Heart left ventricle (tissue), 16 donors: ENCODE measurements at regions of chr2 and their contacts with region 1.

Region 1: GRCh38 chr2:174997110-174997509 is 8.1 kb downstream of the CHN1 start:
- DNase-seq: no peak
- ATAC-seq: no peak
- H3K4me3 ChIP-seq: no peak overlapping the region
- H3K27ac ChIP-seq: no peak overlapping the region
- H3K4me1 ChIP-seq: peaks cover 0 to 24% (median 10%) of the 10 kb centered on the region in 12 donors
- H3K27me3 ChIP-seq: no peaks in the 10 kb centered on the region
- CTCF ChIP-seq: no peak
- POLR2A ChIP-seq: no peak

Region 2: GRCh38 chr2:174697255-174697654 is 299.9 kb before region 1 on chr2:
- intact Hi-C with region 1: loop called in 1 of 10 experiments (anchors 5 kb)
- DNase-seq: peak in 4 of 5 donors; percentile 45 to 52 (median 49)
- ATAC-seq: peak in 3 of 4 donors; percentile 83 to 89 (median 87)
- H3K4me3 ChIP-seq: no peak overlapping the region
- H3K27ac ChIP-seq: no peak overlapping the region
- H3K4me1 ChIP-seq: no peaks in the 10 kb centered on the region
- H3K27me3 ChIP-seq: no peaks in the 10 kb centered on the region
- CTCF ChIP-seq: peak; percentile 42 to 82 (median 74)
- POLR2A ChIP-seq: no peak

Region 3: GRCh38 chr2:175048275-175048674 is 51.2 kb after region 1 on chr2:
- intact Hi-C with region 1: no loop called
- DNase-seq: no peak
- ATAC-seq: no peak
- H3K4me3 ChIP-seq: no peak overlapping the region
- H3K27ac ChIP-seq: no peak overlapping the region
- H3K4me1 ChIP-seq: no peaks in the 10 kb centered on the region
- H3K27me3 ChIP-seq: no peaks in the 10 kb centered on the region
- CTCF ChIP-seq: no peak
- POLR2A ChIP-seq: no peak

Region 4: GRCh38 chr2:175097297-175097696 is 100.2 kb after region 1 on chr2:
- intact Hi-C with region 1: no loop called
- DNase-seq: no peak
- ATAC-seq: no peak
- H3K4me3 ChIP-seq: no peak overlapping the region
- H3K27ac ChIP-seq: no peak overlapping the region
- H3K4me1 ChIP-seq: peaks cover 0 to 7% (median 0%) of the 10 kb centered on the region in 12 donors
- H3K27me3 ChIP-seq: no peaks in the 10 kb centered on the region
- CTCF ChIP-seq: no peak
- POLR2A ChIP-seq: no peak